A673 (cell line): ENCODE measurements at regions of chr21 and their contacts with region 1.

Region 1: DNA sequence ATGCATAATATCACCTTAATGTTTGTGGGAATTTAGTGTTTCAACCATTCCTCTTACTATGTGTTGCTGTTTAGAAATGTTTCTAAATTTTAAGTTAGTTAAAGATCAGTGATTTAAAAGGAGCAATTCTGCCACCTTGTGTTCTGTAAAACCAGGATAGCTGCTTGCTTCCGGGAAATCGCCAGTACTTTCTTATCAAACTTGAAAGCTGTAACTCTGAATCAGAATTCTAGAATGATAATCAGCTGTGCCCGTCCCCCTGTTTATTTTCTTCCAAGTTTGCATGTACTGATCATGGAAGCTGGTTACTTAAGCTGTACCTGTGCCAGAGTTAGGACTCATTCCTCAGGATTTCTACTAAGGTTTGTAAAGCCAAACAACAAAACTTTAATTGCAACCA is 656.4 kb downstream of the LTN1 start:
- DNase-seq: peak; percentile 47
- H3K4me3 ChIP-seq: no peak overlapping the region
- H3K27ac ChIP-seq: no peak overlapping the region
- H3K4me1 ChIP-seq: peaks cover 3% of the 10 kb centered on the region
- H3K27me3 ChIP-seq: no peaks in the 10 kb centered on the region
- CTCF ChIP-seq: peak; percentile 57

Region 2: GRCh38 chr21:26572702-26573381 is 1763.5 kb before region 1 on chr21 and contains the start of gene CYYR1:
- CTCF ChIA-PET with region 1: no interaction called
- POLR2A ChIA-PET with region 1: no interaction called
- intact Hi-C with region 1: no loop called
- DNase-seq: peak; percentile 88
- H3K4me3 ChIP-seq: peak within 1 kb of the TSS; percentile 76
- H3K27ac ChIP-seq: peak within 1 kb of the TSS; percentile 96
- H3K4me1 ChIP-seq: peaks cover 15% of the 10 kb centered on the region
- H3K27me3 ChIP-seq: no peaks in the 10 kb centered on the region
- CTCF ChIP-seq: no peak
- total RNA-seq, gene CYYR1: 89.1 and 96.4 TPM in 2 replicates

Region 3: GRCh38 chr21:27700974-27701614 is 635.2 kb before region 1 on chr21:
- CTCF ChIA-PET with region 1: interaction called, 3 read pairs
- POLR2A ChIA-PET with region 1: no interaction called
- intact Hi-C with region 1: loop called (anchors 5 kb)
- DNase-seq: peak; percentile 84
- H3K4me3 ChIP-seq: no peak overlapping the region
- H3K27ac ChIP-seq: no peak overlapping the region
- H3K4me1 ChIP-seq: no peaks in the 10 kb centered on the region
- H3K27me3 ChIP-seq: no peaks in the 10 kb centered on the region
- CTCF ChIP-seq: peak; percentile 86

Region 4: GRCh38 chr21:27759091-27759659 is 577.1 kb before region 1 on chr21:
- CTCF ChIA-PET with region 1: no interaction called
- POLR2A ChIA-PET with region 1: no interaction called
- intact Hi-C with region 1: loop called (anchors 2 kb)
- DNase-seq: no peak
- H3K4me3 ChIP-seq: no peak overlapping the region
- H3K27ac ChIP-seq: no peak overlapping the region
- H3K4me1 ChIP-seq: no peaks in the 10 kb centered on the region
- H3K27me3 ChIP-seq: no peaks in the 10 kb centered on the region
- CTCF ChIP-seq: 0 out of 2 replicates have a peak, but pooled peaks have one; percentile 16

Region 5: DNA sequence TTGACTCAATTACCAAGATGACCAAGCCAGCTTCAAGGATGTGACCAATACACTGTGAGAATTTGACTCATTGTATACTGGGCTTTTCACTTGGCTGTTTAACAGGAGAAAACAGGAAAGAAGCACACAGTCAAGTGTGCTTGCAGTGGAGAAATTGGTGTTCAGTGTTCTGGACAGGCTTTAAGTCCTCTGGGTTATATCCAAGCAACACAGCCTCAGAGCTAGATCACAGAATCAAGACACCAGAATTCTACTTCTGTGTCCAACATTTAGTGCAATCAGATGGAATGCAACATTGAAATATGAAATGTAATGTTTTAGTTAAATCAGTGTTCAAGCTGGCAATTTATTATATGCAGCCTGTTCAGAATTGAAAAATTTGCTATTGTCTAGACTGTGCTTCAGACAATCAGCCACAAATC is 38.1 kb before region 1 on chr21:
- CTCF ChIA-PET with region 1: no interaction called
- POLR2A ChIA-PET with region 1: no interaction called
- intact Hi-C with region 1: no loop called
- DNase-seq: no peak
- H3K4me3 ChIP-seq: no peak overlapping the region
- H3K27ac ChIP-seq: no peak overlapping the region
- H3K4me1 ChIP-seq: no peaks in the 10 kb centered on the region
- H3K27me3 ChIP-seq: no peaks in the 10 kb centered on the region
- CTCF ChIP-seq: no peak